ENCODE measurements at regions of chr7 and their contacts with region 1.

Region 1: GRCh38 chr7:27921081-27921836 is 181.3 kb downstream of the TAX1BP1 start:
- DNase-seq: no peak
- ATAC-seq: peak; percentile 42
- H3K4me3 Mint-ChIP-seq: no peak overlapping the region
- H3K27ac Mint-ChIP-seq: no peak overlapping the region
- H3K4me1 Mint-ChIP-seq: peaks cover 72% of the 10 kb centered on the region
- H3K27me3 Mint-ChIP-seq: no peaks in the 10 kb centered on the region
- CTCF ChIP-seq: no peak

Region 2: GRCh38 chr7:27576360-27576944 is 344.8 kb before region 1 on chr7:
- CTCF ChIA-PET with region 1: no interaction called
- POLR2A ChIA-PET with region 1: no interaction called
- intact Hi-C with region 1: loop called (anchors 1 kb)
- DNase-seq: no peak
- ATAC-seq: no peak
- H3K4me3 Mint-ChIP-seq: no peak overlapping the region
- H3K27ac Mint-ChIP-seq: no peak overlapping the region
- H3K4me1 Mint-ChIP-seq: no peaks in the 10 kb centered on the region
- H3K27me3 Mint-ChIP-seq: no peaks in the 10 kb centered on the region
- CTCF ChIP-seq: peak; percentile 26

Region 3: DNA sequence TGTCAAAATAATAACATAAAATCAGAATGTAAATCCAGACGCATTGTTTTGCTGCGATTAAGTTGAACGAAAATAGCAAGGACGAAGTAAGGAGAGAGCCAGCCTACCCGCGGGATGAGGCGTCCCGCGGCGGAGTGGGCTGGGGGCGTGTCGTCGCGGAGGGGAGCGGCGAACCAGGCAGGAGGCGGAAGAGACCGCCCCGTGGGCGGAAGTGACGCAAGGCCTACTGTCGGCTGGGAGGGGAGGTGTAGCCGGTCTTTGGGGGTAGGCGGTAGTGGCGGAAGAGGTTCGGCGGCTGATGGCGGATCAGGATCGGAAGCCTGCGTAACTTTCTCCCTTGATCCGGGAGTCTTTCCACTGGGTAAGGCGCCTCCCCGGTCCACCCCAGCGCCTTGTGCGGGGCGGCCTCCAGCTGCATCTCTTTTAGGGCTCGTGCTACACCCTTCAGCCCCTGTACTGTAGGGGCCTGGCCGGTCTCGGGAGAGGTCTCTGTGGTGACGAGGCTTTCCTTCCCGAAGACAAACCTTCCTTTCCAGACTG is 181.3 kb before region 1 on chr7 and contains the start of gene TAX1BP1:
- CTCF ChIA-PET with region 1: interaction called, 5 read pairs
- POLR2A ChIA-PET with region 1: interaction called, 3 read pairs
- intact Hi-C with region 1: loop called (anchors 5 kb)
- DNase-seq: peak; percentile 92
- ATAC-seq: peak; percentile 93
- H3K4me3 Mint-ChIP-seq: peak within 1 kb of the TSS; percentile 95
- H3K27ac Mint-ChIP-seq: peak within 1 kb of the TSS; percentile 96
- H3K4me1 Mint-ChIP-seq: peaks cover 36% of the 10 kb centered on the region
- H3K27me3 Mint-ChIP-seq: no peaks in the 10 kb centered on the region
- CTCF ChIP-seq: no peak
- total RNA-seq, gene TAX1BP1: 61.4 and 64.7 TPM in 2 replicates

Region 4: DNA sequence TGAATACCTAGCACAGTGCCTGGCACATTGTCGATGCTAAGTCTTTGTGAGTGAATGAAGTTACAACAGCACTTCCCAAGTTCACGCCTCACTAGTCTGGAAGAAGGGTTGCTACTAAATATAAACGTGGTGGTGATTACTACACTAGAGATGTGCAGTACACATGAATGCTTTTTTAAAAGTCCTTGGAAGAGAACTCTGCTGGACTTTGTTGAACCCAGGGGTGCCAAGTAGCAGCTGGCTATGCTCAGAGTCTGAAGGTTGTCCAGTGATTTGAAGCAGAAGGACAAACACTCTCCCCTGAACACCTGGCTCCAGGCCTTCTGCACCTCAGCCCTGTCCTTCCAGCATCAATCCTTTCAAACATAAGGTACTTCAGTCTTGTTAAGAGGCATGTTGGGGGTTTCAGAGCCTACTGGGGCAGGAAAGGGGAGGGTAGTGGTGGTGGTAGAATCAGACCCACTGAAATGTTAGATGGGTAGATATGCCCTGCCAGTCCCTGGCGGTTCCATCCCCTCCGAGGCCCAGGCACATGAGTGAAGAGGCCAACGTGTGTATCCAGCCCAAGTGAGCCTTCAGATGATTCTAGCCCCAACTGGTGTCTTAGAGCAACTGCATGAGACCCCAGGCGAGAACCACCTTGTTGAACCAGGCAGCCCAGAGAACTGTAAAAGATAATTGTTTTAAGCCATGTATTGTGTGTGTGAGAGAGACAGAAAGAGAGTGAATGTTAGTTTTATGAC is 86.9 kb before region 1 on chr7:
- CTCF ChIA-PET with region 1: no interaction called
- POLR2A ChIA-PET with region 1: no interaction called
- intact Hi-C with region 1: loop called (anchors 5 kb)
- DNase-seq: no peak
- ATAC-seq: no peak
- H3K4me3 Mint-ChIP-seq: no peak overlapping the region
- H3K27ac Mint-ChIP-seq: no peak overlapping the region
- H3K4me1 Mint-ChIP-seq: no peaks in the 10 kb centered on the region
- H3K27me3 Mint-ChIP-seq: no peaks in the 10 kb centered on the region
- CTCF ChIP-seq: no peak

Region 5: DNA sequence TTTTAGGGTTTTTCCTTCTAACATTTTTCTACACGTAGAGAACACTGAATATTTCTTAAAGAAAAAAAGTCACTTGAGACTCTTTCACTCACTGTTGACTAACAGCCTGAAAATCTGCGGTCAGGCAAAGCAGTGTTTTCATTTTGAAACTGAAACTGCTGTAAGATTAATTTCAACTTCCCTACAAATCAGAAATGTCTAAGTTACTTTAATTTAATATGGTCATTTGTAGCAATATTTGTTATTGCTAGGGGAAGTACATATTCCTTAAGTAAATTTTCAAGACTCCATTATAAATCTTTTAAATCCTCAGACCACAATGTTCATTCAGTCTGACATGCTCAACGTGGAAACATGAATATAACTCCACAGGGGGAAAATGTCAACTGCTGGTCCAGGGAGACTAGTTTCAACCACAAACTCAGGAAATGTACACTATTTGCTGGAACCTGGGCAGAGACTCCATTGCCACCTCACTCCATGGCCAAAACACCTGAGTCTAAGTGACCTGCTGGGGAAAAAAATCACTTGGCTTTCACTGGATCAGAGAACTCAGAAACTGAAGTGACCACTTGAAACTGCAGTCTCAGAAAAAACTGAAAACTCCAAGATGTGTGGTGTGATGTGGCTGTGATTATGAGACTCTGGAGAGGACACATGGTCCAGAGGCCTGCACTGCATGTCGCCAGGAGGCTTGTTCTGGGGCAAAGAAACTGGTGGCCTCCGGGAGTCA is 20.1 kb before region 1 on chr7:
- CTCF ChIA-PET with region 1: interaction called, 14 read pairs
- POLR2A ChIA-PET with region 1: interaction called, 4 read pairs
- intact Hi-C with region 1: loop called (anchors 2 kb)
- DNase-seq: no peak
- ATAC-seq: peak; percentile 76
- H3K4me3 Mint-ChIP-seq: peak overlapping the region; percentile 46
- H3K27ac Mint-ChIP-seq: peak overlapping the region; percentile 86
- H3K4me1 Mint-ChIP-seq: peaks cover 70% of the 10 kb centered on the region
- H3K27me3 Mint-ChIP-seq: no peaks in the 10 kb centered on the region
- CTCF ChIP-seq: no peak

Region 6: GRCh38 chr7:28020302-28020940 is 99.2 kb after region 1 on chr7:
- CTCF ChIA-PET with region 1: interaction called, 3 read pairs
- POLR2A ChIA-PET with region 1: no interaction called
- intact Hi-C with region 1: loop called (anchors 5 kb)
- DNase-seq: no peak
- ATAC-seq: peak; percentile 77
- H3K4me3 Mint-ChIP-seq: no peak overlapping the region
- H3K27ac Mint-ChIP-seq: no peak overlapping the region
- H3K4me1 Mint-ChIP-seq: peaks cover 9% of the 10 kb centered on the region
- H3K27me3 Mint-ChIP-seq: no peaks in the 10 kb centered on the region
- CTCF ChIP-seq: no peak

Region 7: DNA sequence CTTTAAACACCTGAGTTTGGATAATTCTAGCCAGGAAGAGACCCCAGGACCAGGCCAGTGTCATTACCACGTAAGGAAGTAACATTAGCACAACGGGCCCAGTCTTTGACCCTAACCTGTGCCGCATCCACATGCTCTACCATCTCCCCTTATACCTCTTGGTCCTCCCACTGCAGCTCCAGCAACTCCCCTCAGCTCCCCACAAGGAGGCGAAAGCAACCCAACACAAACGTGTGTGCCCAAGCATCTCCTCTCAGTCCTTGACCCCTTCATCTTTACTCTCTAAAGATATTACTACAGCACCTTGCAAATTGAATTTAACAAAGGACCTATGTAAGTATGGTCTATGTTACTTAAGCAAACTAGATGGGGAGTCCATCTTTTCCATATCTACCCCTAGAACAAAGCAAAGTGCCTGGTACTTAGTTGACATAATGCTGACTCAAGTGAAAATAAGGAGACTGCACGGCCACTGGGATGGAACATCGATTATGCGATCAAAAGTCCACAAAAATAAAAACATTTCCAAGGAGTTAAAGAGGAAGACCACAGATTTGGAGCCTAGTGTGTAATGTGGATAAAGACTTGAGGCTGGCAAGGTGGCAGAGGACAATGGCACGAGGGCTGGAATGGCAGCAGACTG is 111.6 kb after region 1 on chr7:
- CTCF ChIA-PET with region 1: no interaction called
- POLR2A ChIA-PET with region 1: no interaction called
- intact Hi-C with region 1: no loop called
- DNase-seq: no peak
- ATAC-seq: no peak
- H3K4me3 Mint-ChIP-seq: no peak overlapping the region
- H3K27ac Mint-ChIP-seq: no peak overlapping the region
- H3K4me1 Mint-ChIP-seq: peaks cover 44% of the 10 kb centered on the region
- H3K27me3 Mint-ChIP-seq: no peaks in the 10 kb centered on the region
- CTCF ChIP-seq: no peak

Measured in activated B cell treated with CpG ODN at 0.5 μM for 24 hours (primary cell).